CD8-positive, alpha-beta T cell (primary cell): ENCODE measurements at regions of chr2 and their contacts with region 1.

Region 1: GRCh38 chr2:9630749-9631483 is at the start of gene YWHAQ:
- DNase-seq: peak; percentile 95 to 100 (median 97)
- ATAC-seq: peak; percentile 90
- H3K4me3 ChIP-seq: peak within 1 kb of the TSS; percentile 90 to 93
- H3K4me3 Mint-ChIP-seq: peak within 1 kb of the TSS; percentile 93
- H3K27ac ChIP-seq: peak within 1 kb of the TSS; percentile 89 to 91
- H3K27ac Mint-ChIP-seq: peak within 1 kb of the TSS; percentile 94
- H3K4me1 ChIP-seq: peaks cover 37% of the 10 kb centered on the region
- H3K4me1 Mint-ChIP-seq: peaks cover 46% of the 10 kb centered on the region
- H3K27me3 ChIP-seq: no peaks in the 10 kb centered on the region
- H3K27me3 Mint-ChIP-seq: no peaks in the 10 kb centered on the region
- CTCF ChIP-seq: no peak
- total RNA-seq, gene YWHAQ: 115 to 123 TPM

Region 2: DNA sequence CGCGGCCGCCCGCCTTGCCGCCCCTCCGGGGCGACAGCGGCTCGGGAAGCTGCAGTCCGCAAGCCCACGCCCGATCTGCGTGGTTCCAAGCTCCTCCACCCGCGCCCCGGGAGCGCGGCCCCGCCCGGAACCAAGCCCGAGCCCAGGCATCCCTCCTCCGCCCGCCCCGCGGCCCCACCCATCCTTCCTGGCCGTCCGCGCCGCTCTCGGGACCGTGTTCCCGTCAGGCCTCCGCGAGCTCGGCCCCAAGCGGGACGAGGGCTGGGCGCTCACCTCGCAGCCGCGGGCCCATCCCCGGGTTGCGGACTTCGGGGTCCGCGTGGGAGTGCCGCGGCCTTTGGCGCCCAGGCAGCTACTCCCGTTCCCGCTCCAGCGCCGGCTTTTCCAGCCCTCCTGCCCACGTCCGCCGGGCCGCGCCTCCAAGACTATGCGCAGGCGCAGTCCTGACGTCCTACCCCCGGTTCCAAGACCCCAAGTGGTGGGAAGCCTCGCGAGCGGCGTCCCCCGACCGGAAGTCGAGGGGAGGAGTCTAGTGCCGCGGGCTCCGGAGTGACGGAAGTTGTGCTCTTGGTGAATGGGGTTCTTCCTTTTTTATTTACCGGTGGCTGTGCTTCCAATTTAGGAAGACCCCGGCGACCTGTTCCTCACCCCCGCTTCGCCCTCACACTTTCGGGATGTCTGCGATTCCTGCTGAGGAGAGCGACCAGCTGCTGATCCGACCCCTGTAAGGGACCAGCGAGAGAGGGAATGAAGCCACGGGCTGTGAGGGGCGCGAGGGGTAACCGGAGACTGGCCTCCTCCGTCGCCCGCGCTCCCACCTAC is 207.6 kb before region 1 on chr2 and contains the starts of genes CPSF3 and ITGB1BP1:
- CTCF ChIA-PET with region 1: interaction called, 3 read pairs
- POLR2A ChIA-PET with region 1: interaction called, 8 read pairs
- intact Hi-C with region 1: loop called (anchors 1 kb)
- DNase-seq: peak; percentile 92 to 99 (median 97)
- ATAC-seq: peak; percentile 86
- H3K4me3 ChIP-seq: peak within 1 kb of the TSS; percentile 93 to 98
- H3K4me3 Mint-ChIP-seq: no peak within 1 kb of the TSS
- H3K27ac ChIP-seq: peak within 1 kb of the TSS; percentile 89 to 90
- H3K27ac Mint-ChIP-seq: peak within 1 kb of the TSS; percentile 89
- H3K4me1 ChIP-seq: peaks cover 22% of the 10 kb centered on the region
- H3K4me1 Mint-ChIP-seq: peaks cover 34% of the 10 kb centered on the region
- H3K27me3 ChIP-seq: no peaks in the 10 kb centered on the region
- H3K27me3 Mint-ChIP-seq: no peaks in the 10 kb centered on the region
- CTCF ChIP-seq: no peak
- total RNA-seq, gene CPSF3: 14.1 to 14.7 TPM
- total RNA-seq, gene ITGB1BP1: 37.2 to 38.8 TPM

Region 3: GRCh38 chr2:9555297-9556141 is 75.4 kb before region 1 on chr2 and contains the start of gene ADAM17:
- CTCF ChIA-PET with region 1: interaction called, 7 read pairs
- POLR2A ChIA-PET with region 1: interaction called, 42 read pairs
- intact Hi-C with region 1: loop called (anchors 1 to 2 kb)
- DNase-seq: peak; percentile 62 to 93 (median 81)
- ATAC-seq: peak; percentile 88
- H3K4me3 ChIP-seq: peak within 1 kb of the TSS; percentile 91 to 96
- H3K4me3 Mint-ChIP-seq: peak within 1 kb of the TSS; percentile 94
- H3K27ac ChIP-seq: peak within 1 kb of the TSS; percentile 93 to 94
- H3K27ac Mint-ChIP-seq: peak within 1 kb of the TSS; percentile 93
- H3K4me1 ChIP-seq: peaks cover 37% of the 10 kb centered on the region
- H3K4me1 Mint-ChIP-seq: peaks cover 49% of the 10 kb centered on the region
- H3K27me3 ChIP-seq: no peaks in the 10 kb centered on the region
- H3K27me3 Mint-ChIP-seq: no peaks in the 10 kb centered on the region
- CTCF ChIP-seq: no peak
- total RNA-seq, gene ADAM17: 20.0 to 25.1 TPM

Region 4: GRCh38 chr2:9618410-9618809 is 12.5 kb before region 1 on chr2:
- CTCF ChIA-PET with region 1: interaction called, 5 read pairs
- POLR2A ChIA-PET with region 1: interaction called, 28 read pairs
- intact Hi-C with region 1: loop called in 1 of 2 experiments (anchors 2 kb)
- DNase-seq: peak in 6 of 9 experiments; percentile 16 to 78 (median 52)
- ATAC-seq: peak; percentile 96
- H3K4me3 ChIP-seq: no peak overlapping the region
- H3K4me3 Mint-ChIP-seq: peak overlapping the region; percentile 78
- H3K27ac ChIP-seq: peak overlapping the region; percentile 38 to 73
- H3K27ac Mint-ChIP-seq: peak overlapping the region; percentile 97
- H3K4me1 ChIP-seq: peaks cover 50% of the 10 kb centered on the region
- H3K4me1 Mint-ChIP-seq: peaks cover 94% of the 10 kb centered on the region
- H3K27me3 ChIP-seq: no peaks in the 10 kb centered on the region
- H3K27me3 Mint-ChIP-seq: no peaks in the 10 kb centered on the region
- CTCF ChIP-seq: no peak

Region 5: DNA sequence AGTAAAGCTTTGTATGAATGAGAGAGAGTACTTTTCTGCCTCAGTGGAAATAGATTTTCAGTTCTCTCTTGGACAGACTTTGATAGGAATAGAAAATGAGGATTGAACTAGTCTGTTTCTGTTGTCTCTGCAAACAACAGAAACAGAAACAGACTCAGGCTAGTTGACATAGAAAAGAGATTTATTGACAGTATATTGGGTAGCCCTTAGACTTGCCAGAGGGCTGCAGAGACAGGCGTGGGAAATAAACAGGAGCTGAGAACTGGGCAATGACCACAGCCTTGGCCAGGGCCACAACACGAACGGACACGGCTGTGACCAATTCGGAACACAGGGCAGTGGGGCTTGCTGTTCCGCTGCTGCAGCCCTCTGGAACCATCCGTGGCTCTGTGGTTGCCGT is 30.3 kb after region 1 on chr2:
- CTCF ChIA-PET with region 1: no interaction called
- POLR2A ChIA-PET with region 1: no interaction called
- intact Hi-C with region 1: no loop called
- DNase-seq: no peak
- ATAC-seq: no peak
- H3K4me3 ChIP-seq: no peak overlapping the region
- H3K4me3 Mint-ChIP-seq: no peak overlapping the region
- H3K27ac ChIP-seq: no peak overlapping the region
- H3K27ac Mint-ChIP-seq: no peak overlapping the region
- H3K4me1 ChIP-seq: no peaks in the 10 kb centered on the region
- H3K4me1 Mint-ChIP-seq: peaks cover 9% of the 10 kb centered on the region
- H3K27me3 ChIP-seq: no peaks in the 10 kb centered on the region
- H3K27me3 Mint-ChIP-seq: no peaks in the 10 kb centered on the region
- CTCF ChIP-seq: no peak

Region 6: GRCh38 chr2:9843229-9844035 is 212.5 kb after region 1 on chr2 and contains the start of gene TAF1B:
- CTCF ChIA-PET with region 1: no interaction called
- POLR2A ChIA-PET with region 1: interaction called, 7 read pairs
- intact Hi-C with region 1: loop called (anchors 1 to 2 kb)
- DNase-seq: peak; percentile 53 to 93 (median 84)
- ATAC-seq: peak; percentile 84
- H3K4me3 ChIP-seq: peak within 1 kb of the TSS; percentile 71 to 74
- H3K4me3 Mint-ChIP-seq: peak within 1 kb of the TSS; percentile 93
- H3K27ac ChIP-seq: peak within 1 kb of the TSS; percentile 65 to 84
- H3K27ac Mint-ChIP-seq: peak within 1 kb of the TSS; percentile 90
- H3K4me1 ChIP-seq: peaks cover 20% of the 10 kb centered on the region
- H3K4me1 Mint-ChIP-seq: peaks cover 48% of the 10 kb centered on the region
- H3K27me3 ChIP-seq: no peaks in the 10 kb centered on the region
- H3K27me3 Mint-ChIP-seq: no peaks in the 10 kb centered on the region
- CTCF ChIP-seq: no peak
- total RNA-seq, gene TAF1B: 13.3 to 15.8 TPM

Region 7: DNA sequence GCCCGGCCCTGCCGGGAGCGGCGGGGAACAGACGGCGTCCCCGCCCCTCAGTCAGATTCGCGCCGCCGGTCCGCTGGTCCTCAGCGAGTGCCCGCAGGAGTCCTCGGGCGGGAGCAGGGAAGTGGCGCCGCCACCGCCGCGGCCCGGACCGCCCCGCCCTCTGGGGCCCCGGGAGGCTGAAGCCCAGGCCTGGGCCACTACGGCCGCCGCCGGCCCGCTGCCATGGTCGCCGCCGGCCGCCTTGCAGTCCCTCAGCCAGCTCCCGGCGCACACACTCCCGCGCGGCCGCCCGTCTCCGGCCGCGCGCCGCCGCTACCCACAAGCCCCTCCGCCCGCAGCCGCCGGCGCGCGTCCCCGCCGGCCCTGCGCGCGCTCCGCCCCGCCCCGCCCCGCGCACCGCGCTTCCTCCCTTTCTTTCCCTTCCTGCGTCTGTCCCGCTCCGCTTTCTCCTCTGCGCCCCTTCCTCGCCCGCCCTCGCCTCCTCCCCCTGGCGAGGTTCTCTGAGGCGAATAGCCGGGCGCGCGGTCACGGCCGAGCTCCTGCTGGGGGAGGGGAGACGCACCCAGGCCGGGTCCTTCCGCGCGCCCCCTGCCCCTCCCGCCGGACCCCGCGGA is 1713.5 kb after region 1 on chr2 and contains the start of gene ROCK2:
- CTCF ChIA-PET with region 1: no interaction called
- POLR2A ChIA-PET with region 1: no interaction called
- intact Hi-C with region 1: loop called in 1 of 2 experiments (anchors 10 kb)
- DNase-seq: peak; percentile 28 to 81 (median 62)
- ATAC-seq: peak; percentile 61
- H3K4me3 ChIP-seq: peak within 1 kb of the TSS; percentile 79 to 85
- H3K4me3 Mint-ChIP-seq: peak within 1 kb of the TSS; percentile 95
- H3K27ac ChIP-seq: peak within 1 kb of the TSS; percentile 37 to 43
- H3K27ac Mint-ChIP-seq: peak within 1 kb of the TSS; percentile 90
- H3K4me1 ChIP-seq: peaks cover 12% of the 10 kb centered on the region
- H3K4me1 Mint-ChIP-seq: peaks cover 42% of the 10 kb centered on the region
- H3K27me3 ChIP-seq: no peaks in the 10 kb centered on the region
- H3K27me3 Mint-ChIP-seq: no peaks in the 10 kb centered on the region
- CTCF ChIP-seq: no peak
- total RNA-seq, gene ROCK2: 4.1 to 5.7 TPM